ENCODE measurements at regions of chr6 and their contacts with region 1.

Region 1: DNA sequence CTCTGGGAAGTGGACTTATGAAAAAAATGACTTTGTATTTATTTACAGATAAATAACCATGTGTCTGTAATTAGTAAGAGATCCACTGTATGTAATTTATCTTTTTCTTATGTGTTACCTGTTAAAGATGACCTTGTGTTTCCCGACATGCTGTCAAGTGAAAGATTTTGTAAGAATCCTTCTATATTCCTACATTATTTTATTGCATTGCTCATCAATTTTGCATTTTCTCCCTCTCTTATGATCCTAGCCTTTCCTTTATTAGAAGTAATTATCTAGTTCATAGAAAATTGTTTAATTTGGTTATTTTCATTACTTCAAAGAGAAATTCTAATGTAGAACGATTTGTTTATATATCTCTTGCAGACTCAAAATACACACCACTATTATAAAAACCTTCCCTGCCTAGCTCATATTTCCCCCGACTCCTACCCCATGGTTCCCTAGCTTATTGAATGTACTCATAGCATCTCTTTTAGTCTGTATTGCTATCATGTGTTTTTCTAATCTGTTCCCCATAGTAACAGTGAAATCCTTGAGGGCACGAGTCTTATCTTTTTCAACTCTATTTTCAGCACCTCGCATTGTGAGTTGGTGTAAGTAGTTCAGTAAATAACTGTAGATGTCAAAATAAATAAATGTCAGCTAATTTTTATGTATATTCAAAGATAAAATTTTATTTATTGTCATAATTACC is 774.4 kb downstream of the HDGFL1 start:
- DNase-seq: no peak
- ATAC-seq: no peak
- H3K4me3 ChIP-seq: no peak overlapping the region
- H3K4me3 Mint-ChIP-seq: no peak overlapping the region
- H3K27ac ChIP-seq: no peak overlapping the region
- H3K27ac Mint-ChIP-seq: no peak overlapping the region
- H3K4me1 ChIP-seq: no peaks in the 10 kb centered on the region
- H3K4me1 Mint-ChIP-seq: no peaks in the 10 kb centered on the region
- H3K27me3 ChIP-seq: no peaks in the 10 kb centered on the region
- H3K27me3 Mint-ChIP-seq: peaks cover 0 to 4% of the 10 kb centered on the region in 2 donors

Region 2: GRCh38 chr6:23016696-23017095 is 327.1 kb before region 1 on chr6:
- CTCF ChIA-PET with region 1: no interaction called
- POLR2A ChIA-PET with region 1: interaction called in 1 of 2 experiments, 15 read pairs
- DNase-seq: no peak
- ATAC-seq: no peak
- H3K4me3 ChIP-seq: no peak overlapping the region
- H3K4me3 Mint-ChIP-seq: no peak overlapping the region
- H3K27ac ChIP-seq: no peak overlapping the region
- H3K27ac Mint-ChIP-seq: no peak overlapping the region
- H3K4me1 ChIP-seq: no peaks in the 10 kb centered on the region
- H3K4me1 Mint-ChIP-seq: no peaks in the 10 kb centered on the region
- H3K27me3 ChIP-seq: no peaks in the 10 kb centered on the region
- H3K27me3 Mint-ChIP-seq: no peaks in the 10 kb centered on the region

Region 3: GRCh38 chr6:23202207-23202606 is 141.6 kb before region 1 on chr6:
- CTCF ChIA-PET with region 1: no interaction called
- POLR2A ChIA-PET with region 1: no interaction called
- DNase-seq: no peak
- ATAC-seq: no peak
- H3K4me3 ChIP-seq: no peak overlapping the region
- H3K4me3 Mint-ChIP-seq: no peak overlapping the region
- H3K27ac ChIP-seq: no peak overlapping the region
- H3K27ac Mint-ChIP-seq: no peak overlapping the region
- H3K4me1 ChIP-seq: no peaks in the 10 kb centered on the region
- H3K4me1 Mint-ChIP-seq: no peaks in the 10 kb centered on the region
- H3K27me3 ChIP-seq: no peaks in the 10 kb centered on the region
- H3K27me3 Mint-ChIP-seq: no peaks in the 10 kb centered on the region

Region 4: DNA sequence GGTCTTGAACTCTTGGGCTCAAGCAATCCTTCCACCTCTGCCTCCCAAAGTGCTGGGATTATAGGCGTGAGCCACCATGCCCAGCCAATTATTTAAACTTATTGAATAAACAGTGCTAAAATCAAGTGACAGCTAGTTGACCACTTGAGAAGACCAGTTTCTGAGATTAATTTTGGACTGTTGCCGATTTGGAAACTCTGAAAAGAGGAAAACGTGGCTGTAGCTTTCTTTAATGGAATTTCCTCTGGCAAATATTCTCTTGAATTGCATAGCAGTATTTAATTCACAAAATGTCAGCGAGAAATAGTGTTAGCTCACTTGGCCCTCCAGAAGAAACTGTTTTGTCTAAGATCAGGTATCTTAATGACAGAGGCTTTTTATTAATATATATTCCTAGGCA is 19.9 kb before region 1 on chr6:
- CTCF ChIA-PET with region 1: no interaction called
- POLR2A ChIA-PET with region 1: no interaction called
- DNase-seq: no peak
- ATAC-seq: no peak
- H3K4me3 ChIP-seq: no peak overlapping the region
- H3K4me3 Mint-ChIP-seq: no peak overlapping the region
- H3K27ac ChIP-seq: no peak overlapping the region
- H3K27ac Mint-ChIP-seq: no peak overlapping the region
- H3K4me1 ChIP-seq: no peaks in the 10 kb centered on the region
- H3K4me1 Mint-ChIP-seq: no peaks in the 10 kb centered on the region
- H3K27me3 ChIP-seq: no peaks in the 10 kb centered on the region
- H3K27me3 Mint-ChIP-seq: no peaks in the 10 kb centered on the region

Region 5: DNA sequence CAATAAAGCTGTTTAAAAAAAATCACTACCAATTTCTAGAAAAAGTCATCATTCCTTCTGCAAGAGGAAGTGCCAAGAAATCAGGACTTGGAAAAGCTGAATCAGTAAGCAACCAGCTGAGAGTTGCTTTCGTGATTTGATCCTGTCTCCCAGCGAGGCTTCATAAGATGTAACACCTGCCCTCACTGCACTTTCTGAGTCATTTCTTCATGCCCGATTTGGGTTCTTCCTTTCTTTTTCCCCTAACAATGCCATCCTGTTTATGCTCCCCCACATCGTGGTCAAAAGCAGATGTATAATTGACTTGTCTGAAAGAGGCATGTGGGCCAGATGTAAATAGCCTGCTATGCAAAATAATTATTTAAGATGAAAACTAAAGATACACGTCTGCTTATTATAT is 1539.9 kb after region 1 on chr6:
- CTCF ChIA-PET with region 1: no interaction called
- POLR2A ChIA-PET with region 1: no interaction called
- DNase-seq: no peak
- ATAC-seq: peak in 2 of 4 experiments; percentile 48 to 52
- H3K4me3 ChIP-seq: no peak overlapping the region
- H3K4me3 Mint-ChIP-seq: peak overlapping the region in 2 of 3 donors; percentile 38 to 46
- H3K27ac ChIP-seq: peak overlapping the region; percentile 33
- H3K27ac Mint-ChIP-seq: peak overlapping the region; percentile 77 to 93
- H3K4me1 ChIP-seq: peaks cover 46 to 60% of the 10 kb centered on the region in 2 experiments
- H3K4me1 Mint-ChIP-seq: peaks cover 87 to 98% (median 88%) of the 10 kb centered on the region in 3 donors
- H3K27me3 ChIP-seq: no peaks in the 10 kb centered on the region
- H3K27me3 Mint-ChIP-seq: no peaks in the 10 kb centered on the region